ENCODE measurements at regions of chr17 and their contacts with region 1.

Region 1: DNA sequence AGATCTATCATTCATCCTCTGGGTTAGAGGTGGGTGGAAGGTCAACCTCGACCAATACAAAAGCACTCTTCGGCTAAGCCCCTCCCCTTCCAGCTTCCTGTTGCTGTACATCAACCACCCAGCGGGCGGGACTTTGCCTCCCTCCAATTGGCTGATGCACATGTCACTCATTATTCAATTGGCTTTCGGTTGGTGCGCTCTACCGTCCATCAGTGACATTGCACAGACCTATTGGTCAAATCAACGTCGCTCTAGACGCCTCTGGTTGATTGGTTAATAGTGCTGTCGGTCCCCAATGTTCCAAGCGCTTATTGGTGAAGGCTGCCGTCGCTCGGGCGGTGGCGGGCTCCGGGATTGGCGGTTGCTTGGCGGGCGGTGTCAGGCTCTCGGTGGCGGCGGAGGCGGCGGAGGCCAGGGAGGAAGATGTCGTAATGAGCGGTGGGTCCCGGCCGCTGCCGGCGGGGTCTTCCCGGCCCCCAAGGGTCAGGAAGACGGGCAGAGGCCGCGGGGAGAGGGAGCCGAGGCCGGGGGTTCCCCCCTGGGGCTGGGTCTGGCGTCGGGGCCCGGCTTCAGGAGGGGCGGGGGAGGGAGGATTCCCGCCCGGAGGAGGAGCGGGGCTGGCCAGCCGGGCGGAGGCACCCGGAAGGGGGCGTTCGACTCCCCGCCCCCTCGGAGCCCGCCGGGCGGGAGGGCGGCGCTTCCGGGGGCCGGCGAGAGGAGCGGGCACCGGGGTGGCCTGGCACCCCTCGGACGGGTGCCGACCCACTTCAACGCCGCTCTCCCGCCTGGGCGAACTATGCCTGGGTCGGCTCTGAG is at the start of gene SP2:
- DNase-seq: peak; percentile 99
- ATAC-seq: peak; percentile 95
- total RNA-seq, gene SP2: 11.7 TPM

Region 2: GRCh38 chr17:47698749-47699535 is 197.1 kb before region 1 on chr17:
- intact Hi-C with region 1: loop called (anchors 10 kb)
- DNase-seq: peak; percentile 83
- ATAC-seq: no peak

Region 3: DNA sequence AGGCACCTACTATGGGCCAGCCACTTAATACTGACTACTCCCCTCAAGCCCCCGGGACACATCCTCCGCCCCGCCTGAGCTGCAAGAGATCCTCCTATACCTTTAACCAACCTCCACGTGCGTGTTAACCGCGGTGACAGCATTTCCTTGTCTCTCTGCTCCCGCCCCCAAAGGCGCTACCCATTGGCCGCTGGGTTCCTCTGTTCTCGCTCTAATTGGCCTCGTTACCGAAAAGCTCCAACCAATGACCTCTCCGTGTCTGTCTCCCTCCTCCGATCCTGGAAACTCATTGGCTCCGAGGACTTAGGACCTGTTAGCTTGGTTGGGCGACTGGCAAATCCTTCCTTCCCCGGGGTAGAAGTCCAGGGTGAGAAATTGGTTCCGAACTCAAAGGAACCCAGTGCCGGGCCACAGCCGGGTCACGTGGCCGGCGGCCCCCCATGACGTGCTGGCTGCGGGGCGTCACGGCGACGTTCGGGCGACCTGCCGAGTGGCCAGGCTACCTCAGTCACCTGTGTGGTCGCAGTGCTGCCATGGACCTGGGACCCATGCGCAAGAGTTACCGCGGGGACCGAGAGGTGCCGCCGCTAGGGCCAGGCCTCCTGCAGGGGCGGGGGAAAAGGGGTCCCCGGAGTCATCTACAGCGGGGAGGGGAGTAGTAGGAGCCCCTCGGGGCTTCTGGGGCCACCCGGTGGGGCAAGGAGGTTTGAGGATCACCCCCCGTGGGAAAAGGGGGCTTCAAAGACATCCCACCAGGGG is 45.4 kb after region 1 on chr17 and contains the start of gene PNPO:
- intact Hi-C with region 1: loop called (anchors 2 kb)
- DNase-seq: peak; percentile 96
- ATAC-seq: peak; percentile 97
- total RNA-seq, gene PNPO: 27.8 TPM

Region 4: DNA sequence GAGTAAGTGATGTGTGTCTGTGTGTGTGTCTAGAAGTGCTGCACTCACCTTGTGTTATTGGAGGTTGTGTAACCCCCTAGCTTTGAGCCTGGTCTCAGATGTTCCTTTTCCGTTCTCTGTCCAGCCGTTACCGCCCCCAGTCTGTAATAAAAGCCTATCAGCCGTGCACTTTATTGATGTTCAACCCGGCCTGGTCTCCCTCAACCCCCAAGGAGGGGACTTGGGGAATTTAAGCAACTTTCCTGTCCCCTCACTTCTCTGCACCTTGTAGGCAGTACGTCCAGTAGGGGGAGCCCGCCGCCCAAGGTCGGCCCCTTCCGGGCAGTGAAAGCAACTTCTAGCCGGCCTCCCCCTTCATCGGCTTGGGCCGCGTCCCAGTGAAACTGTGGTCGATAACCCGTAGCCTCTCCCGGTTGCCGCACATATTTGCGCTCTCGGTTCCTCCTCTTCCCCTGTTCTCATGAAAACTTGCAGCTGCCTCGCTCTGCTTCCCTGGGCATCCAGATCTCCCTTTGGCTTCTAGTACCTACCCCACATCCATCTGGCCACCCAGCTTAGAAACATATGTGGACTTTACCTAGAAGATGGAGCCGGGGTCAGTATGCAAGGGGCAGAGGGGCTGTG is 53.2 kb after region 1 on chr17:
- intact Hi-C with region 1: loop called (anchors 2 kb)
- DNase-seq: peak; percentile 96
- ATAC-seq: peak; percentile 90